ENCODE measurements at regions of chr4 and their contacts with region 1.

Region 1: DNA sequence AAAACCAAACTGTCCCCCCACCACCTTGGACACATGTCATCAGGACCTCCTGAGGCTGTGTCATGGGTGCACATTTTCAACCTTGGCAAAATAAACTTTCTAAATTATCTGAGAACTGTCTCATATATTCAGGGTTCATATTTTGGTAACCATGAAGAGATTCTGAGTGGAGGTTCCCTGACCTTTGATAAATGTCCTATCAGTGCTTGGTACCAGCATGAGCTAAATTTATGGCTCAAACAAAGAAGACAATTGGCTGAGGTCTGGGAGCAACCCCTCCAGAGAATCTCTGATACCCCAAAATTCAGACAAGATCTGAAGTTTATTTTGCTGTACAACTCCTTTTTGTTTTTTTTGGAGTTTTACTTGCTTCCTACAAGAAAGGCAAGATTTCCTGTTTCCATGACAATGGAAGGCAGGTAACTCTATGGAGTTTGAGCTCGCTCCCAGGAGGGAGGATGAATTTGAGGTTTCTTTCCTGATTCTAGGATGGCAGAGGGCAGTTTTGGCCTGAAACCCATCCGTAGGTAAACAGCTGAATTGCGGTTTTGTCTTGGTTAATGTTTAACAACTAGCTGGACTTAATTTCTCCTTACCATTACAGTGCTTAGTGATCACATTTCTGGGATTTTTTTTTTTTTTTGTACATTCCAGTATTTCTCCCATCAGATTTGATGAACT is 14.5 kb downstream of the UGT2B15 start:
- DNase-seq: no peak
- H3K4me3 ChIP-seq: no peak overlapping the region
- H3K27ac ChIP-seq: no peak overlapping the region
- H3K4me1 ChIP-seq: no peaks in the 10 kb centered on the region
- H3K27me3 ChIP-seq: no peaks in the 10 kb centered on the region
- CTCF ChIP-seq: no peak
- EP300 ChIP-seq: no peak
- POLR2A ChIP-seq: no peak

Region 2: DNA sequence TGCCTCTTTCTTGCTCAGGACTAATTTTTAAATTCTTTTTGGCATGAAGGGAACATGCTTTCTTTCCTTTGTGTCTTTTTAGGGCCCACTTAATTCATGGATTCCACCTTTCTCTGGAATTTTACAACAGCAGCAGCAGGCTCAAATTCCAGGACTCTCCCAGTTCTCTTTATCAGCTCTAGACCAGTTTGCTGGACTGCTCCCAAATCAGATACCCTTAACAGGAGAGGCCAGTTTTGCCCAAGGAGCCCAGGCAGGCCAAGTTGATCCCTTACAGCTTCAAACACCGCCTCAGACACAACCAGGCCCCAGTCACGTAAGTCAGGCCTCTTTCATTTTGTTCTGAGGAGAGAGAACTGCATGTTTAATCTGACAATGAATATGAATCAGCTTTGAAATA is 1541.9 kb after region 1 on chr4:
- intact Hi-C with region 1: loop called in 1 of 4 experiments (anchors 10 kb)
- DNase-seq: no peak
- H3K4me3 ChIP-seq: no peak overlapping the region
- H3K27ac ChIP-seq: no peak overlapping the region
- H3K4me1 ChIP-seq: no peaks in the 10 kb centered on the region
- H3K27me3 ChIP-seq: no peaks in the 10 kb centered on the region
- CTCF ChIP-seq: no peak
- EP300 ChIP-seq: no peak
- POLR2A ChIP-seq: no peak